GM12878 (cell line): ENCODE measurements at regions of chr4 and their contacts with region 1.

Region 1: DNA sequence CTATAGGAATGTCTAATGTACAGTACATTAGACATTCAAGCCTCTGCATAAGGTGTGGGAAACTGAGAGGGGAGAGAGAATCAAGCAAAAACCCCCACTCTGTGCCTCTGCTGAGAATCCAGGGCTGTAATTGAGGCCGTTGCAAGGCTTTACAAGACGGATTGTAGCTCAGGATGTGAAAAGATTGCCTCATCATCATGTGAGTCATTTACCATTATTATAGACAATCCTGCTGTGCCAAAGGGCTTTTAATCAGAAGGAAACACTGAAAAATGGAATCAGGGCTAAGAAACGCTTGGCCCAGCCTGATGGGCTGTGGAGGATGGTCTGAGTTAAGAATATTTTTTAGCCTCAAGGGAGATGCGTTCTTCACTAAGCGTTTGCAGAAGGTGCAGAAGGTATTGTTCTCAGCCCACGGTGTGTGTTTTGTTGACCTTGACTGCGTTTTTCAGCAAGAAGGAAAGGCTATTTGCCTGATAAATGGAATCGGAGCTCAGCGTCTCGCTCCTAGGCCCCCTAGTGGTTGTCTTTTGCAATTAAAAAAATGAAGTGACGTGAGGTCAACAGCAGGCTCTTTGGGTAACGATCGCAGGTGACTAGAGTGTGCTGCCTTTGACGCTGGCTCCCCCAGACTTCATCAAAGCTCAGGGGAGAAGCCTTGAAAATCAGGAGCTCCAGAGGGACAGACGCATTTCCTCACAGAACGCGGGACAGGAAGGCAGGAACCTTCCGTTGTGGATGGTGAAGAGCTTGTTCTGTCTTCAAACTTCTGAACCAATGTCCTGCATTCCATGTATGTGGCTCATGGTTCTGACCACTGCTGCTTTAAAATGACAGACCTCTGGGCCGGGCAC is 18.1 kb upstream of the CHRNA9 start:
- DNase-seq: peak; percentile 78
- ATAC-seq: peak; percentile 86
- H3K4me3 ChIP-seq: peak overlapping the region; percentile 62
- H3K27ac ChIP-seq: peak overlapping the region; percentile 75
- H3K4me1 ChIP-seq: peaks cover 10% of the 10 kb centered on the region
- H3K27me3 ChIP-seq: no peaks in the 10 kb centered on the region
- CTCF ChIP-seq: peak; percentile 75 to 88 (median 82)
- EP300 ChIP-seq: no peak
- POLR2A ChIP-seq: 0 out of 2 replicates have a peak, but pooled peaks have one; percentile 32
- RAD21 ChIP-seq: peak; percentile 74

Region 2: GRCh38 chr4:39103291-39103690 is 1213.7 kb before region 1 on chr4:
- CTCF ChIA-PET with region 1: no interaction called
- POLR2A ChIA-PET with region 1: no interaction called
- RAD21 ChIA-PET with region 1: no interaction called
- SMC1A ChIA-PET with region 1: no interaction called
- in situ Hi-C with region 1: no loop called
- intact Hi-C with region 1: no loop called
- DNase-seq: no peak
- ATAC-seq: peak; percentile 71
- H3K4me3 ChIP-seq: no peak overlapping the region
- H3K27ac ChIP-seq: no peak overlapping the region
- H3K4me1 ChIP-seq: no peaks in the 10 kb centered on the region
- H3K27me3 ChIP-seq: no peaks in the 10 kb centered on the region
- CTCF ChIP-seq: peak in 1 of 3 experiments; percentile 25; a peak in 1 of 6 replicates
- EP300 ChIP-seq: no peak
- POLR2A ChIP-seq: no peak
- RAD21 ChIP-seq: peak; percentile 26; the same call in 1 of the 2 replicates

Region 3: DNA sequence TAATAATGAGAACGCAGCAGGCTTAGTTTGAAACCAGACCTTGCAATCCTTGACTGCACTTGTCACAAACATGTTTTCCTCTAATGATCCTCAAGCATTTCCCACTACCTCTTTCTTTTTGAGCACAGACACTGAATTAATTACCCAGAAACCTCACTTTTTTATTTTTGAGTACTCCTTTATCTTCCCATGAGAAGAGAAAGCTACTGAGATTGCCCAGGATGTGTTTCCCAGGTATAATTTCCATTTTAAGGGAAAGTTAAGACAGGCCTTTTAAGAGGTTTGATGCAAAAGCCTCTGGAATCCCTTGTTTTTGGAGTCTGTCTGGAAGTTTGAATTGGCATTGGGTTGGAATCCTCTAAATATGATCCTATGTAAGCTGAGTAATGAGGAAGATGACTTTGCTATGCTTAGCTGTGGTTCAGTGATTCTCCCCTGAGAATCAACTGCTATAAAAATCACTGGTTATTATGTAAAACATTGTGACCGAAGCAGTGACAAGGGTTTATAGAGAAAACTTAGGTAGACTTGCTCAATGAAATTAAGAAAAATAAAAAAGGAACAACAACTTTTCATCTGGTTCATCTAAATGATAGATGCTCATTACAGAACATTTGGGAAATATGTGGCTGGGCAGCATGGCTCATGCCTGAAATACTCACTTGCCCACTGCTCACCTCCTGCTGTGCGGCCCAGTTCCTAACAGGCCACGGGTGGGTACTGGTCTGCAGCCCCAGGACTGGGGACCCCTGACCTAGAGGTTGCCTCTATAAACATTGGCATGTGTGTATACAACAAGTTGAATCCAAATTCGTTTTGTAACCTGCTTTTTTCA is 131.0 kb before region 1 on chr4:
- CTCF ChIA-PET with region 1: interaction called, 10 read pairs
- POLR2A ChIA-PET with region 1: interaction called, 11 read pairs
- RAD21 ChIA-PET with region 1: interaction called, 356 read pairs
- SMC1A ChIA-PET with region 1: interaction called, 374 read pairs
- in situ Hi-C with region 1: no loop called
- intact Hi-C with region 1: no loop called
- DNase-seq: peak; percentile 94
- ATAC-seq: peak; percentile 66
- H3K4me3 ChIP-seq: no peak overlapping the region
- H3K27ac ChIP-seq: peak overlapping the region; percentile 89
- H3K4me1 ChIP-seq: peaks cover 46% of the 10 kb centered on the region
- H3K27me3 ChIP-seq: no peaks in the 10 kb centered on the region
- CTCF ChIP-seq: no peak
- EP300 ChIP-seq: peak; percentile 81 to 90
- POLR2A ChIP-seq: 0 out of 2 replicates have a peak, but pooled peaks have one; percentile 31
- RAD21 ChIP-seq: 0 out of 2 replicates have a peak, but pooled peaks have one; percentile 0

Region 4: GRCh38 chr4:40205259-40206198 is 111.5 kb before region 1 on chr4:
- CTCF ChIA-PET with region 1: interaction called, 11 read pairs
- POLR2A ChIA-PET with region 1: interaction called, 6 read pairs
- RAD21 ChIA-PET with region 1: interaction called, 356 read pairs
- SMC1A ChIA-PET with region 1: interaction called, 374 read pairs
- in situ Hi-C with region 1: no loop called
- intact Hi-C with region 1: no loop called
- DNase-seq: peak; percentile 96
- ATAC-seq: peak; percentile 57
- H3K4me3 ChIP-seq: peak overlapping the region; percentile 72
- H3K27ac ChIP-seq: peak overlapping the region; percentile 92
- H3K4me1 ChIP-seq: peaks cover 22% of the 10 kb centered on the region
- H3K27me3 ChIP-seq: no peaks in the 10 kb centered on the region
- CTCF ChIP-seq: no peak
- EP300 ChIP-seq: peak; percentile 78 to 86
- POLR2A ChIP-seq: peak; percentile 57
- RAD21 ChIP-seq: 0 out of 2 replicates have a peak, but pooled peaks have one; percentile 1

Region 5: DNA sequence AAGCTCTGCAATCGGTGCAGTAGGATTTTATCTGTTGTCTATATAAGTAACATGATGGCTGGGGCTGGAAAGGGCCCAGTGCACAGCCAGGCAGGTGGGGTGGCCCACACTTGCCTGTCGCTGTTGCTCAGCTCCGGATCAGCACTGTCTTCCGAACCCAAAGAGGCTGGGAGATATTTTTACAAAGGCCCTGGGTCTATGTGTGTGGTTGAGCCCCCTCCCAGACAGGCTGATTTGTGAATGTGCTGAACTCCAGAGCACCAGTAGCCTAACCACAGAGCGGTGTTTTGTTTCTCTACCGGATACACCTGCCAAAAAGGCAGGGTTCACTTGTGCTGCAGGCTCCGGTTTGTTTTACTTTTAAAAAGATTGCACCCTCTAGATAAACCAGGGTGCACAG is 15.4 kb before region 1 on chr4:
- CTCF ChIA-PET with region 1: interaction called, 66 read pairs
- POLR2A ChIA-PET with region 1: interaction called, 14 read pairs
- RAD21 ChIA-PET with region 1: interaction called, 85 read pairs
- SMC1A ChIA-PET with region 1: interaction called, 58 read pairs
- in situ Hi-C with region 1: no loop called
- intact Hi-C with region 1: no loop called
- DNase-seq: peak; percentile 85
- ATAC-seq: peak; percentile 67
- H3K4me3 ChIP-seq: peak overlapping the region; percentile 25; the same call in 1 of the 2 replicates
- H3K27ac ChIP-seq: peak overlapping the region; percentile 56
- H3K4me1 ChIP-seq: peaks cover 56% of the 10 kb centered on the region
- H3K27me3 ChIP-seq: no peaks in the 10 kb centered on the region
- CTCF ChIP-seq: no peak
- EP300 ChIP-seq: peak; percentile 65 to 90; a peak in 3 of 4 replicates
- POLR2A ChIP-seq: peak; percentile 62
- RAD21 ChIP-seq: no peak